ENCODE measurements at regions of chr14 and their contacts with region 1.

Region 1: DNA sequence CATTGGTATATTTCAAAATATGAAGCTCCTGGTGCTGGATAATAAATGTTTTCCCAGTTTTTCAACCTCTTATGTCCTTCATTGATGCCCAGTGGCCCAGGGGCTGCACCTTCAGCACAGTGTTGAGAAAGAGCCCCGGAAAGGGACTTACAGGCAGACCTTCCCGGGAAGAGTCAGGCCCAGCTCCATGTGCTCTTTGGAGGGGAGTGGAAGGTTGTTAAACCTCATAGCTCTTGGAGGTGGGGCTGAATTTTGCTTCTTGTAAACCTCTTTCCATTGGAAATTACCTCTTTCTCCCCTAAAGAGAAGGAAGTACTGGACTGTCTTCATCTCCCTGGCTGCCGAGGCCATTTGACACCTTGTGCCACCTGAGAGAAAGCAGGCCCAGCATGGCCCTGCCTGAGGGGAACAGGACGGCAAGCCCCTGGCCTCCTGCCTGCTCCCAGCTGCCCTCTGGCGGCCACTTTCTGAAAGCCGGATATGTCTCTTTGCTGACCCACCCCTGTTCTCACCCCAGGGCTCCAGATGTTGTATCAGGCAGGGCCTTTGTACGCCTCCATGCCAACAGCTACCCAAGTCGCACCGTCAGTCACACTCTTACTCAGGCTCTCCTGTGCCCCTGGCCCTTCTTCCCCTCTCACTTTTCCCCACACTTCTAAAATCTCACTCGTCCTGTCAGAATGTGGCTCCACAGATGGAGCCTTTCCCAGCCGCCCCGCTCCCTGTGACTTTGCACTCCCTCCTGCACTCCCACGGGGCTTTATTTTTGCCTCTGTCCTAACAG is 43.0 kb downstream of the EVL start:
- DNase-seq: peak; percentile 82
- ATAC-seq: peak; percentile 83
- H3K4me3 ChIP-seq: no peak overlapping the region
- H3K27ac ChIP-seq: no peak overlapping the region
- H3K4me1 ChIP-seq: peaks cover 21% of the 10 kb centered on the region
- H3K27me3 ChIP-seq: no peaks in the 10 kb centered on the region
- CTCF ChIP-seq: peak; percentile 93

Region 2: DNA sequence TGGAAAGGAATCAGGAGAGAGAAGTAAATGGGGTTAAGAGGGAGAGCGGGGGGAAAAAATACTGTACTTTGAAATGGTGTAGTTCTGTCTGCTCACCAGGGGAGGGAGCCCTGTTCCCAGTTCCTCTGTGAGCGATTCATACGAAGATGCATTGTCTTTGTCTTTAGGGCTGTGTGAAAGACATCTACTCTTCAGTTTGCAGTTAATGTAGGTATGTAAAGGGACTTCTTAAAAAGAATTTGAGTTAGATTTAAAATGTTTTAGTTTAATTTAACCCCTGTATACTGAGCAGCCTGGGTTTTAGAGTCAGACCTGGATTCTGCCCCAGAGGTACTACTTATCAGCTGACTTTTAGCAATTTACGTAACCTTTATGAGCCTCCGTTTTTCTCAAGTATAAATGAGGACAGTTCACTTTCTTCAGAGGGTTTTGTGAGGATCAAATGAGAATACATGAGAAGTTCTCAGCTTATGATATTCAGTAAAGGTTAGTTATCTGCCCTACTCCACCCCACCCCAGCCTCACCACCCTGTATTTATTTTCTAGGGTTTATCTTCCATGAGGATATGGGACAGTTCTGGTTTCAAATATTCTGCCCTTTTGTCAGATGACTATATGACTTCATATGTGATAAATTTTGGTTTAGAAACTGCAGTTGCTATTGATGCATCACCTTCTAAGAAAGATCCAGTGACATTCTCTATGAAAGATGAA is 125.5 kb before region 1 on chr14:
- CTCF ChIA-PET with region 1: no interaction called
- POLR2A ChIA-PET with region 1: no interaction called
- intact Hi-C with region 1: loop called (anchors 1 kb)
- DNase-seq: peak; percentile 71
- ATAC-seq: peak; percentile 74
- H3K4me3 ChIP-seq: no peak overlapping the region
- H3K27ac ChIP-seq: no peak overlapping the region
- H3K4me1 ChIP-seq: peaks cover 14% of the 10 kb centered on the region
- H3K27me3 ChIP-seq: no peaks in the 10 kb centered on the region
- CTCF ChIP-seq: peak; percentile 90

Region 3: GRCh38 chr14:100031536-100032281 is 76.5 kb before region 1 on chr14:
- CTCF ChIA-PET with region 1: no interaction called
- POLR2A ChIA-PET with region 1: no interaction called
- intact Hi-C with region 1: loop called (anchors 5 kb)
- DNase-seq: peak; percentile 98
- ATAC-seq: peak; percentile 87
- H3K4me3 ChIP-seq: peak overlapping the region; percentile 71
- H3K27ac ChIP-seq: peak overlapping the region; percentile 94
- H3K4me1 ChIP-seq: peaks cover 48% of the 10 kb centered on the region
- H3K27me3 ChIP-seq: no peaks in the 10 kb centered on the region
- CTCF ChIP-seq: peak; percentile 46

Region 4: GRCh38 chr14:100056964-100057795 is 51.1 kb before region 1 on chr14:
- CTCF ChIA-PET with region 1: no interaction called
- POLR2A ChIA-PET with region 1: no interaction called
- intact Hi-C with region 1: no loop called
- DNase-seq: peak; percentile 51
- ATAC-seq: peak; percentile 27; the same call in 1 of the 2 replicates
- H3K4me3 ChIP-seq: no peak overlapping the region
- H3K27ac ChIP-seq: no peak overlapping the region
- H3K4me1 ChIP-seq: peaks cover 21% of the 10 kb centered on the region
- H3K27me3 ChIP-seq: no peaks in the 10 kb centered on the region
- CTCF ChIP-seq: peak; percentile 61

Region 5: DNA sequence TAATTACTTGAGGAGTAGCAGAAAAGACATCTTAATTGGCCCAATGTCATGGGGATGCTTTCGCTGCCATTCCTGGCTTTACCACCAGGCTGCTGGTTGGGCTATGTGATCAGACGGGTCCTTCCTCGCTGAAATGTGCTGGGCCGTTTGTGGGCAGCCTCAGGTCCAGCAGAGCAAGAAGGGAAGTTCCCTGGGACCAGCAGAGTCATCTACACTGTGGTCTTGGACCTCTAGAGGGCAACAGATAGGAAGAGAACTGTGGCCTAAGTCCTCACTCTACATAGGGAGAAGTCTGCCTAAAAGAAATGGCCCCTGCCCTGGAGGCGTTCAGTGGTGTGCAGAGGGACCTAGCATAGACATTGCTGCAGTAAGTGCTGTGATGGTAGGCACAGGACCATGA is 32.1 kb before region 1 on chr14:
- CTCF ChIA-PET with region 1: interaction called, 4 read pairs
- POLR2A ChIA-PET with region 1: no interaction called
- intact Hi-C with region 1: loop called (anchors 1 kb)
- DNase-seq: peak; percentile 34
- ATAC-seq: peak; percentile 61
- H3K4me3 ChIP-seq: no peak overlapping the region
- H3K27ac ChIP-seq: no peak overlapping the region
- H3K4me1 ChIP-seq: peaks cover 15% of the 10 kb centered on the region
- H3K27me3 ChIP-seq: no peaks in the 10 kb centered on the region
- CTCF ChIP-seq: peak; percentile 40; the same call in 1 of the 2 replicates

Region 6: DNA sequence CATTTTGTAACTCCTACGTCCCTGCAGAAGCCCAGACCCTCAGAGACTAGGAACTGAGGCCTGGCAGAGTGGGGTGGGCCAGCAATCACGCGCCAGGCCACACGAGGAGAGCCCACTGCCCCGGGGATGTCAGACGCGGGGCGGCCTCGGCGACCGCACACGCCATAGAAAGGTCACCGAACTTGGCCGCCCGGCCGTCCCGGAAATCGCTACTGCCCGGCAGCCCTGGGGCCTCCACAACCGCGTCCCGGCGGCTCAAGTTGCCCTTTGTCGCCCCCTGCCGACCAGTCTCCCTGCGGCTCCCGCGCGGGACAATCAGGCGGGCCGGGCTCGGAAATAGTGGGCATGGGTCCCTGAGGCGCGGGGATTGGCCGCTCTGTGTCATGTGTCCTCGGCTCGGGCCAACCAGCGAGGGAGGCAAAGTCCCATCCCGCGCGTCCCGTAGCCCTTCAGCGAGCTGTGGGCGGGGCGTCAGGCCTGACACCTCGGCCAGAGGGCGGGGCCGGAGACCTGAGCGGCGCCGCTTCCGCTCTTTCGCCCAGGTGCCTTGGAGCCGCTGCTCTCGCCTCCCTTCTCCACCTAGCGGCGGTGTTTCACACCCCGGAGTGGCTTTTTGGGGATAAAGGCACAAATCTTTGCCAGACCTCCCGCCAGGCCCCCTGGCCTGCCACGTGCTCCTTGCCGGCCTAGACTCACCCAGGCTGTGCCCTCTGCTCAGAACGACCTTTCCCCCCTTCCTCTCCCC is 84.6 kb after region 1 on chr14:
- CTCF ChIA-PET with region 1: interaction called, 4 read pairs
- POLR2A ChIA-PET with region 1: no interaction called
- intact Hi-C with region 1: loop called (anchors 2 kb)
- DNase-seq: peak; percentile 99
- ATAC-seq: peak; percentile 99
- H3K4me3 ChIP-seq: peak overlapping the region; percentile 66
- H3K27ac ChIP-seq: peak overlapping the region; percentile 38
- H3K4me1 ChIP-seq: peaks cover 12% of the 10 kb centered on the region
- H3K27me3 ChIP-seq: no peaks in the 10 kb centered on the region
- CTCF ChIP-seq: peak; percentile 76

Measured in PC-3 (cell line).